Activated CD8-positive, alpha-beta T cell treated with anti-CD3 and anti-CD28 coated beads for 36 hours (primary cell): ENCODE measurements at regions of chr6 and their contacts with region 1.

Region 1: DNA sequence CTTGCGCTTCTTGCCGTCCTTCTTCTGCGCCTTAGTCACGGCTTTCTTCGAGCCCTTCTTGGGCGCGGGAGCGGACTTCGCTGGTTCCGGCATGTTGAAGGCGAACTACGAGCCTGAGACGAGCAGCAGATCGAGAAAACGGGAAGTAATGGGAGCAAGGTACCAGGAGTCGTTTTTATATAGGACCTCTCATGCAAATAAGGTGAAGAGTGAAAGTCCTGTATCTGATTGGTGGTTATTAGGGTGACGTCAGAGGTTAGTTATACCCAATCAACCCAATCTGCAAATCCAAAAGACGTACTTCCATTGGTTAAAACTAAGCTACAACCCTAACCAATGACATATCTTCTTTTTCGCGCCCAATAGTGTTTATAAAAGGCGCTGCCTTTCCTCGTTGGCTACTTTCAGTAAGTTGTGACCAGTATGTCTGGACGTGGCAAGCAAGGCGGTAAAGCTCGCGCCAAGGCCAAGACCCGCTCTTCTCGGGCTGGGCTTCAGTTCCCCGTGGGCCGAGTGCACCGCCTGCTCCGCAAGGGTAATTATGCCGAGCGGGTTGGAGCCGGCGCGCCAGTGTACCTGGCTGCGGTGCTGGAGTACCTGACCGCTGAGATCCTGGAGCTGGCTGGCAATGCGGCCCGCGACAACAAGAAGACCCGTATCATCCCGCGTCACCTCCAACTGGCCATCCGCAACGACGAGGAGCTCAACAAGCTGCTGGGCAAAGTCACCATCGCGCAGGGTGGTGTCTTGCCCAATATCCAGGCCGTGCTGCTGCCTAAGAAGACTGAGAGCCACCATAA is 100.6 kb upstream of the PRSS16 start:
- DNase-seq: peak; percentile 85
- ATAC-seq: peak; percentile 72
- H3K4me3 Mint-ChIP-seq: no peak overlapping the region
- H3K27ac Mint-ChIP-seq: no peak overlapping the region
- H3K4me1 Mint-ChIP-seq: peaks cover 13% of the 10 kb centered on the region
- H3K27me3 Mint-ChIP-seq: no peaks in the 10 kb centered on the region
- CTCF ChIP-seq: no peak

Region 2: GRCh38 chr6:26122793-26123674 is 1023.9 kb before region 1 on chr6:
- CTCF ChIA-PET with region 1: no interaction called
- POLR2A ChIA-PET with region 1: interaction called, 16 read pairs
- intact Hi-C with region 1: no loop called
- DNase-seq: peak; percentile 98
- ATAC-seq: peak; percentile 60
- H3K4me3 Mint-ChIP-seq: peak overlapping the region; percentile 84
- H3K27ac Mint-ChIP-seq: peak overlapping the region; percentile 98
- H3K4me1 Mint-ChIP-seq: peaks cover 27% of the 10 kb centered on the region
- H3K27me3 Mint-ChIP-seq: no peaks in the 10 kb centered on the region
- CTCF ChIP-seq: no peak

Region 3: GRCh38 chr6:26216356-26216885 is 930.5 kb before region 1 on chr6:
- CTCF ChIA-PET with region 1: no interaction called
- POLR2A ChIA-PET with region 1: interaction called, 14 read pairs
- intact Hi-C with region 1: no loop called
- DNase-seq: peak; percentile 87
- ATAC-seq: peak; percentile 80
- H3K4me3 Mint-ChIP-seq: no peak overlapping the region
- H3K27ac Mint-ChIP-seq: no peak overlapping the region
- H3K4me1 Mint-ChIP-seq: peaks cover 11% of the 10 kb centered on the region
- H3K27me3 Mint-ChIP-seq: no peaks in the 10 kb centered on the region
- CTCF ChIP-seq: no peak

Region 4: GRCh38 chr6:26457806-26458688 is 688.9 kb before region 1 on chr6 and contains the start of gene BTN2A1:
- CTCF ChIA-PET with region 1: no interaction called
- POLR2A ChIA-PET with region 1: no interaction called
- intact Hi-C with region 1: no loop called
- DNase-seq: peak; percentile 75
- ATAC-seq: peak; percentile 98
- H3K4me3 Mint-ChIP-seq: peak within 1 kb of the TSS; percentile 92
- H3K27ac Mint-ChIP-seq: peak within 1 kb of the TSS; percentile 95
- H3K4me1 Mint-ChIP-seq: peaks cover 50% of the 10 kb centered on the region
- H3K27me3 Mint-ChIP-seq: no peaks in the 10 kb centered on the region
- CTCF ChIP-seq: no peak
- total RNA-seq, gene BTN2A1: 14.2 to 16.2 TPM

Region 5: GRCh38 chr6:27121640-27122039 is 25.3 kb before region 1 on chr6:
- CTCF ChIA-PET with region 1: interaction called, 15 read pairs
- POLR2A ChIA-PET with region 1: interaction called, 692 read pairs
- intact Hi-C with region 1: no loop called
- DNase-seq: no peak
- ATAC-seq: no peak
- H3K4me3 Mint-ChIP-seq: no peak overlapping the region
- H3K27ac Mint-ChIP-seq: no peak overlapping the region
- H3K4me1 Mint-ChIP-seq: peaks cover 12% of the 10 kb centered on the region
- H3K27me3 Mint-ChIP-seq: no peaks in the 10 kb centered on the region
- CTCF ChIP-seq: no peak

Region 6: GRCh38 chr6:27809939-27810767 is 663.2 kb after region 1 on chr6:
- CTCF ChIA-PET with region 1: interaction called, 5 read pairs
- POLR2A ChIA-PET with region 1: interaction called, 233 read pairs
- intact Hi-C with region 1: loop called (anchors 5 kb)
- DNase-seq: peak; percentile 78
- ATAC-seq: peak; percentile 38
- H3K4me3 Mint-ChIP-seq: peak overlapping the region; percentile 88
- H3K27ac Mint-ChIP-seq: peak overlapping the region; percentile 87
- H3K4me1 Mint-ChIP-seq: peaks cover 56% of the 10 kb centered on the region
- H3K27me3 Mint-ChIP-seq: no peaks in the 10 kb centered on the region
- CTCF ChIP-seq: no peak

Region 7: DNA sequence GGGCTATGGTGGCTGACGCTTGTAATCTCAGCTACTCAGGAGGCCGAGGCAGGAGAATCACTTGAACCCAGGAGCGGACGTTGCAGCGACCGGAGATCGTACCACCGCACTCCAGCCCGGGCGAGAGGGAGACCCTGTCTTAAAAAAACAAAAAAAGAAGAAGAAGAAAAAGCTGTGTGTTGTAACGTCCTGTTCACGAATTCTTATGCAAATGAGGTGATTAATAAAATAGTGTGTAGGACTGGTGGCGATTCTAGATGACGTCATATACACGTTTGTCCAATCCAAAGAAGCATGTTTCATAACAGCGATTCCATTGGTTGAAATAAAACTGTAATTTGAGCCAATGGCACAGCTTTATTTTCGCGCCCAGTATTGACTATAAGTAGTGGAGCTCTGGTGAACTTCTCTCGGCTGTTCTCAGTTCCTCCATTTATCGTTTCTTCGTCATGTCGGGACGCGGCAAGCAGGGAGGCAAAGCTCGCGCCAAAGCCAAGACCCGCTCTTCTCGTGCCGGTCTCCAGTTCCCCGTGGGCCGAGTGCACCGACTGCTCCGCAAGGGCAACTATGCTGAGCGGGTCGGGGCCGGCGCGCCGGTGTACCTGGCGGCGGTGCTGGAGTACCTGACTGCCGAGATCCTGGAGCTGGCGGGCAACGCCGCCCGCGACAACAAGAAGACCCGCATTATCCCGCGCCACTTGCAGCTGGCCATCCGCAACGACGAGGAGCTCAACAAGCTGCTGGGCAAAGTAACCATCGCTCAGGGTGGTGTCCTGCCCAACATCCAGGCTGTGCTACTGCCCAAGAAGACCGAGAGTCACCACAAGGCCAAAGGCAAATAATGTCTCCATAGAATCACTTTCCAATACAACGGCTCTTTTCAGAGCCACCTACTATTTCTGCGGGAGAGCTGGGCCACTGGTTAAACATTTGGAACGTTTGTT is 718.3 kb after region 1 on chr6:
- CTCF ChIA-PET with region 1: no interaction called
- POLR2A ChIA-PET with region 1: interaction called, 85 read pairs
- intact Hi-C with region 1: no loop called
- DNase-seq: peak; percentile 81
- ATAC-seq: peak; percentile 58
- H3K4me3 Mint-ChIP-seq: peak overlapping the region; percentile 91
- H3K27ac Mint-ChIP-seq: peak overlapping the region; percentile 98
- H3K4me1 Mint-ChIP-seq: peaks cover 27% of the 10 kb centered on the region
- H3K27me3 Mint-ChIP-seq: no peaks in the 10 kb centered on the region
- CTCF ChIP-seq: no peak